Activated CD4-positive, alpha-beta T cell treated with anti-CD3 and anti-CD28 coated beads, Interleukin-2, amount 10 ng/mL, durations not matched to agents 24 days and 14 days (primary cell): ENCODE measurements at regions of chr20 and their contacts with region 1.

Region 1: GRCh38 chr20:23668477-23668951 is 20.3 kb downstream of the CST4 start:
- DNase-seq: peak; percentile 82
- H3K4me3 Mint-ChIP-seq: no peak overlapping the region
- H3K27ac Mint-ChIP-seq: no peak overlapping the region
- H3K4me1 Mint-ChIP-seq: no peaks in the 10 kb centered on the region
- H3K27me3 Mint-ChIP-seq: no peaks in the 10 kb centered on the region

Region 2: GRCh38 chr20:23710771-23711170 is 42.3 kb after region 1 on chr20:
- intact Hi-C with region 1: no loop called
- DNase-seq: peak; percentile 40
- H3K4me3 Mint-ChIP-seq: no peak overlapping the region
- H3K27ac Mint-ChIP-seq: no peak overlapping the region
- H3K4me1 Mint-ChIP-seq: no peaks in the 10 kb centered on the region
- H3K27me3 Mint-ChIP-seq: no peaks in the 10 kb centered on the region

Region 3: DNA sequence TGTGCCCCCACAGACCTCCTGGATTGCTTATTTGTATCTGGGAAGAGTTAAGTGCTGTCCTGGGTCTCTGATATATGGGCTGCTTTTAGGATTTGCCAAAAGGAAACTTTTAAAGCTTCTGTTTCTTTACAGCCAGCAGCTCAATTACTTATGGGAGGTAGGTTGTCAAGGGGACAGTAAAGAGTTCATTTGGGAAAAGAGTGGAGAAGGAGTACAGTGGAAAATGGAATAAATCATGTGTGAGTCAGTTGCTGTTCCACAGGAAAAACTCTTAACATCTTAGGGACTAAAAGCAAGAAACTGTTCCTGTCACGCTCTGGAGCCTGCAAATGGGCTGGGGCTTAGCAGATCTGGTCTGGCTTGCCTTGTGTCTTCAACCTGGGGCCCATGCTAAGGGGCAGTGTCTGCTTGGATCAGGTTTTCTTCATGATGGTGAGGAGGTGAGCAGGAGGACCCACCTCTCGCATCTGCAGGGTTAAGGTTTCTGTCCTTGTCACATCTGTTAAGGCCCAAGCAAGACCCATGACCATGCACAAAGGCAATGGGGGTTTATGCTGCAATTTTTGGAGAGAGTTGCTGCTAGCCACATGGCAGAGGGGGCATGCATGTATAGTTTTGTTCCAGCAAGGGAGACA is 90.9 kb after region 1 on chr20:
- intact Hi-C with region 1: no loop called
- DNase-seq: no peak
- H3K4me3 Mint-ChIP-seq: no peak overlapping the region
- H3K27ac Mint-ChIP-seq: no peak overlapping the region
- H3K4me1 Mint-ChIP-seq: no peaks in the 10 kb centered on the region
- H3K27me3 Mint-ChIP-seq: peaks cover 4% of the 10 kb centered on the region

Region 4: GRCh38 chr20:23782366-23782985 is 114.0 kb after region 1 on chr20:
- intact Hi-C with region 1: loop called (anchors 10 kb)
- DNase-seq: peak; percentile 61
- H3K4me3 Mint-ChIP-seq: no peak overlapping the region
- H3K27ac Mint-ChIP-seq: no peak overlapping the region
- H3K4me1 Mint-ChIP-seq: no peaks in the 10 kb centered on the region
- H3K27me3 Mint-ChIP-seq: no peaks in the 10 kb centered on the region

Region 5: GRCh38 chr20:24547967-24548366 is 879.5 kb after region 1 on chr20:
- intact Hi-C with region 1: no loop called
- DNase-seq: peak; percentile 27
- H3K4me3 Mint-ChIP-seq: no peak overlapping the region
- H3K27ac Mint-ChIP-seq: no peak overlapping the region
- H3K4me1 Mint-ChIP-seq: no peaks in the 10 kb centered on the region
- H3K27me3 Mint-ChIP-seq: no peaks in the 10 kb centered on the region